ENCODE measurements at regions of chr1 and their contacts with region 1.

Region 1: GRCh38 chr1:209576798-209577197 is 6.7 kb upstream of the CAMK1G start:
- DNase-seq: peak; percentile 84
- H3K4me3 ChIP-seq: no peak overlapping the region; a peak in 1 of 4 replicates
- H3K27ac ChIP-seq: no peak overlapping the region
- H3K4me1 ChIP-seq: peaks cover 3 to 7% of the 10 kb centered on the region in 2 experiments; a peak in 1 of 4 replicates
- H3K27me3 ChIP-seq: no peaks in the 10 kb centered on the region
- CTCF ChIP-seq: peak; percentile 96
- EP300 ChIP-seq: no peak
- RAD21 ChIP-seq: peak; percentile 88

Region 2: GRCh38 chr1:209595599-209596285 is 18.9 kb after region 1 on chr1:
- CTCF ChIA-PET with region 1: interaction called, 26 read pairs
- POLR2A ChIA-PET with region 1: no interaction called
- DNase-seq: no peak
- H3K4me3 ChIP-seq: no peak overlapping the region
- H3K27ac ChIP-seq: no peak overlapping the region
- H3K4me1 ChIP-seq: peaks cover 0 to 20% of the 10 kb centered on the region in 2 experiments; a peak in 2 of 4 replicates
- H3K27me3 ChIP-seq: no peaks in the 10 kb centered on the region
- CTCF ChIP-seq: no peak
- EP300 ChIP-seq: no peak
- RAD21 ChIP-seq: no peak

Region 3: DNA sequence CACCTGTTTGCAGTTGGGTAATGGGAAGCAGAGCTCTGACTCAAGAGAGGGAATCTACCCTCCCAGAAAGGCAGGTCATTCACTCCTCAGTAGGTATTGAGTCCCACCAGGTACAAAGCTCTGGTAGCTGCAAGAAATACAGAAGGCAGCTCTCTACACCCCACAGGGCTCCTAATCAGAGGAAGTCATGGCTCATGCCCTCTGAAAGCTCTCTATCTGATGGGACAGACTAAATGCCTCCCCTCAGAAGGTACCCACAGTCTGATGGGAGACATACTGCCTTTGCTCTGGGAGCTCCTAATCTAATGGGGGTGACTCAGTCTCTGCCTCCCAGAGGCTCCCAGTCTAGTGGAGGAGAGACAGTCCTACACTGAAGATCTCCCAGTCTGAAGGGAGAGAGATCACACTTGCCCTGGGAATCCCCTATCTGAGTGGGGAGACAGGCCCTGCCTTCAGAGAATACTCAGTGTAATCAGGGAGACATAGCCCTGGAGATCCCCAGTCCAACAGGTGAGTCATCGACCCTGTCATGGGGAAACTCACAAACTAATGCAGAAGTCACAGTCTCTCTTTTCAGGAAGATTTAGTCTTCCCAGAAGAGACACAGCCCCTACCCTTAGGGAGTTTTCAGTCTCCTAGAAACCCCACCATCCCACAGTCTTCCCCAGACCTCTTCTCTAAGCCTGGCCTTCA is 30.4 kb after region 1 on chr1:
- CTCF ChIA-PET with region 1: interaction called, 16 read pairs
- POLR2A ChIA-PET with region 1: no interaction called
- DNase-seq: no peak
- H3K4me3 ChIP-seq: no peak overlapping the region
- H3K27ac ChIP-seq: peak overlapping the region in 1 of 2 experiments; percentile 38; a peak in 2 of 4 replicates
- H3K4me1 ChIP-seq: peaks cover 0 to 8% of the 10 kb centered on the region in 2 experiments; a peak in 2 of 4 replicates
- H3K27me3 ChIP-seq: no peaks in the 10 kb centered on the region
- CTCF ChIP-seq: no peak
- EP300 ChIP-seq: no peak
- RAD21 ChIP-seq: no peak

Region 4: DNA sequence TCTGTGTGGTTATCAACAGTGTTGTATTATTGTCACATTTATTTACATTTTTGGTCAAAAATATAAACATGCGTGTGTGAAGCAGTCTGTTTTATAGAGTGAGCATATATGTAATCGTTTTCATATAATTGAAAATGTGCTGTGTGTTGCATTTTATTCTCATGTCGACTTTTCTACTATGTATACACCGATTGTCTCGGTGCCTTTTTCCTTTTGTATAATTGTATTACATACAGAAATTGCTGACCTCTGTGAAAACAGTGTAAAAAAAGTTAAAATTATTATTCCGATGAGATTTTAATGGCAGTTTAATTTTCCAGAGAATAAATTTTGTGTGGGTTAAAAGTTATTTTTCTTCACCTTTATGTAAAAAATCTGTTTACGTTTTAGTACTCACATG is 593.4 kb after region 1 on chr1:
- CTCF ChIA-PET with region 1: no interaction called
- POLR2A ChIA-PET with region 1: no interaction called
- DNase-seq: no peak
- H3K4me3 ChIP-seq: no peak overlapping the region
- H3K27ac ChIP-seq: no peak overlapping the region
- H3K4me1 ChIP-seq: no peaks in the 10 kb centered on the region; a peak in 1 of 4 replicates
- H3K27me3 ChIP-seq: no peaks in the 10 kb centered on the region
- CTCF ChIP-seq: no peak
- EP300 ChIP-seq: no peak
- RAD21 ChIP-seq: no peak